ENCODE measurements at regions of chr14 and their contacts with region 1.

Region 1: DNA sequence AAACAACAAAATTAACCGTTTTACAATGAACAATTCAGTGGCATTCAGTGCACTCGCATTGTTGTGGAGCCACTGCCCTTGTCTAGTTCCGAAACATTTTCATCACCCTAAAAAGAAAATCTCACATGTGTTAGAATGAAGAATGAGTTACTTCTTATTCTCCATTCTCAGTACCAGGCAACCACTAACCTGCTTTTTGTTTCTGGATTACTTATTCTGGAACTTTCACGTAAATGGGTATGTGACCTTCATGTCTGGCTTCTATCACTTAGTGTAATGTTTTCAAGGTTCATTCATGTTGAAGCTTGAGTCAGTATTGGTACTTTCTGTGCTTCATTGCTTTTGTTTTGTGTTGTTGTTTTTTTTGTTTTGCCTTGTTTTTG is 15.6 kb downstream of the RCOR1 start:
- DNase-seq: peak; percentile 79
- ATAC-seq: peak; percentile 82
- H3K4me3 ChIP-seq: peak overlapping the region; percentile 46; the same call in 1 of the 2 replicates
- H3K27ac ChIP-seq: peak overlapping the region; percentile 28
- H3K4me1 ChIP-seq: peaks cover 63% of the 10 kb centered on the region
- H3K27me3 ChIP-seq: no peaks in the 10 kb centered on the region
- CTCF ChIP-seq: no peak
- EP300 ChIP-seq: 0 out of 4 replicates have a peak, but pooled peaks of 1 of the 2 experiments have one; percentile 17
- POLR2A ChIP-seq: no peak
- RAD21 ChIP-seq: no peak

Region 2: DNA sequence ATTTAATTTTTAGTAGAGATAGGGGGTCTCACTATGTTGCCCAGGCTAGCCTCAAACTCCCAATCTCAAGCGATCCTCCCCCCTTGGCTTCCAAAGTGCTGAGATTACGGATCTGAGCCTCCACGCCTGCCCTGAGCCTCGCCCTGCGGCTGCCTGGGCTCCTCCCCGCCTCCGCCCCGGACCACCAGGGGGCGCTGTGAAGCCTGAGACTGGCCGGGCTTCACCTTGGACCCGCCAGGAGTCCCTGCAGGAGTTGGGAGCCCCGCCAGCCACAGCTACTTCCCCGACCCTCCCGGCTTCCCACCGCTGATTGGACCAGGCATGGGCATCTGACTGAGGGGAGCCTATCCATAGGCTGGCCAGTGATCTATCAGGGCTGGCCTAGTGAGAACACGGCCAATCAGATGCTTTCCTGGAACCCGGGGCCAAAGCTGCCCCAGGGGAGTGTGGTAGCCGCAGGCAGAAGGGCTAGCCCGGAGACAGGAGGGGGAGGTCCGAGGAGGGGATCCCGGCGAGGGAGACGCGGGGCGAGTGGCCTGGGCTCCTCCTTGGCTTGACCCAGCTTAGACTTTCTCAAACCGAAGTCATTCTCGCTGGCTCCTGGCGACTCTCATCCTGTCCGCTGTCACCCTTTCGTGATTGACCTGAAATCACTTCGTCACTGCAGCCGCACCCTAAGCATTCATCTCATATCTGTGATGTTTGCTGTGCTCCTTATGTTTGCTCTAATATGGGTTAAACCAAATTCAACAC is 83.4 kb before region 1 on chr14:
- CTCF ChIA-PET with region 1: interaction called, 8 read pairs
- POLR2A ChIA-PET with region 1: interaction called, 4 read pairs
- RAD21 ChIA-PET with region 1: interaction called, 10 read pairs
- SMC1A ChIA-PET with region 1: interaction called, 6 read pairs
- in situ Hi-C with region 1: no loop called
- intact Hi-C with region 1: no loop called
- DNase-seq: peak; percentile 96
- ATAC-seq: peak; percentile 99
- H3K4me3 ChIP-seq: peak overlapping the region; percentile 84
- H3K27ac ChIP-seq: peak overlapping the region; percentile 43
- H3K4me1 ChIP-seq: no peaks in the 10 kb centered on the region; the same call in 1 of the 2 replicates
- H3K27me3 ChIP-seq: no peaks in the 10 kb centered on the region
- CTCF ChIP-seq: peak; percentile 96 to 97 (median 97)
- EP300 ChIP-seq: no peak
- POLR2A ChIP-seq: peak; percentile 83
- RAD21 ChIP-seq: peak; percentile 81

Region 3: GRCh38 chr14:102622262-102622885 is 14.3 kb after region 1 on chr14:
- CTCF ChIA-PET with region 1: interaction called, 7 read pairs
- POLR2A ChIA-PET with region 1: interaction called, 6 read pairs
- RAD21 ChIA-PET with region 1: interaction called, 3 read pairs
- SMC1A ChIA-PET with region 1: interaction called, 14 read pairs
- in situ Hi-C with region 1: no loop called
- intact Hi-C with region 1: no loop called
- DNase-seq: no peak
- ATAC-seq: peak; percentile 24; the same call in 1 of the 3 replicates
- H3K4me3 ChIP-seq: no peak overlapping the region; the same call in 1 of the 2 replicates
- H3K27ac ChIP-seq: peak overlapping the region; percentile 4; the same call in 1 of the 2 replicates
- H3K4me1 ChIP-seq: peaks cover 15% of the 10 kb centered on the region
- H3K27me3 ChIP-seq: no peaks in the 10 kb centered on the region
- CTCF ChIP-seq: no peak
- EP300 ChIP-seq: no peak
- POLR2A ChIP-seq: no peak
- RAD21 ChIP-seq: no peak

Region 4: DNA sequence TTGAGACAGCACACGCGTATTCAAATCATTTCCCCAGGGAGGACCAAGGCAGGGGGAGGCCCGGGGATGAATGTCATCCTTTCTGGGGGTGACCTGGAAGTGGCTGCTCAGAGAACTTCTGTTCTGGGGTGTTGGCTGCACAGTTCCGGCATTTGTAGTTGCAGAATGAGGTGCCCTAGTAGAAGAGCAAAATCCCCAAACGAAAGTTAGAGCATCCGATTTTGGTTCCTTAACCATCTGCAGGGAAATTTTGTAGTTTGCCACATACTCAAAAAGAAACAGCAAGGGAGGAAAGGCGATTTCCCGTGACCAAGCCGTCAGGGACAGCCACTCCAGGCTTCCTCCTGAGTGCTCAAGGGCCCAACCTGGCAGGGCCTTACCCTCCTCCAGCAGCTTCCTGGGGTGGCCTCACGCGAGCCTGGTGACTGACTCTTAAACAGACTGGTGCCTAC is 156.2 kb after region 1 on chr14:
- CTCF ChIA-PET with region 1: no interaction called
- POLR2A ChIA-PET with region 1: no interaction called
- RAD21 ChIA-PET with region 1: interaction called, 3 read pairs
- SMC1A ChIA-PET with region 1: interaction called, 3 read pairs
- in situ Hi-C with region 1: no loop called
- intact Hi-C with region 1: loop called (anchors 5 kb)
- DNase-seq: peak; percentile 97
- ATAC-seq: peak; percentile 76
- H3K4me3 ChIP-seq: no peak overlapping the region
- H3K27ac ChIP-seq: peak overlapping the region; percentile 92
- H3K4me1 ChIP-seq: peaks cover 51% of the 10 kb centered on the region
- H3K27me3 ChIP-seq: no peaks in the 10 kb centered on the region
- CTCF ChIP-seq: no peak
- EP300 ChIP-seq: peak; percentile 51 to 73; a peak in 2 of 4 replicates
- POLR2A ChIP-seq: no peak
- RAD21 ChIP-seq: no peak

Measured in GM12878 (cell line).